Transverse colon (tissue), 4 donors: ENCODE measurements at regions of chr12 and their contacts with region 1.

Region 1: DNA sequence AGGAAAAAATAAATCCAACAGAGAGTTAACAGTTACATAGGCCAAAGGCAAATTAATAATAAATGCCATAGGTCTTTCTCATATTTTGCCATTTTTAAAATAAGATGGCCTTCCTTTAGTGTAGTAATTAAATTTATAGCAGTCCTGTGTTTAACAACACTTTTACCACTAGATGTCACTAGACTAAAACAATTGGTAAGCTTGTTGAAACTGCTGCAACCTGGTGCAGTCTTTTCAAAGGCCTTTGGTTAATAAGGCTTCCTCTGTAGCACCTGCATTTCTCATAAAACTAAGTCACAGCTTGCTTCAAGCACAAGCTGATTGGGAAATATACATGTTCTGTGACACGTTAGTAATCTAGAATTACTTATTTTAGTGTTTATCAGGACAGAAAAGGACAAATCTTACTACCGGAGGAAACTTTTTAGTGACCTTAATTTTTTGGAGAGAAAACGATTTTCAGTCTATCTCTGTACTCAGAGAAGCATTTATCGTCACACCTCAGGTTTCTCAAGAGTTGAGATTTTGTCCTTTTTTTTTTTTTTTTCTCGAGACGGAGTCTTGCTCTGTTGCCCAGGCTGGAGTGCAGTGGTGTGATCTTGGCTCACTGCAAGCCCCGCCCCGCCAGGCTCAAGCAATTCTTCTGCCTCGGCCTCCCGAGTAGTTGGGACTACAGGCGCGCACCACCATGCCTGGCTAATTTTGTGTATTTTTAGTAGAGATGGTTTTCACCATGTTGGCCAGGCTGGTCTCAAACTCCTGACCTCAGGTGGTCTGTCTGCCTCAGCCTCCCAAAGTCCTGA is 20.0 kb downstream of the BORCS5 start:
- DNase-seq: no peak
- H3K4me3 ChIP-seq: no peak overlapping the region
- H3K27ac ChIP-seq: peak overlapping the region in 1 of 4 donors; percentile 2
- H3K4me1 ChIP-seq: peaks cover 4 to 38% (median 11%) of the 10 kb centered on the region in 4 donors
- H3K27me3 ChIP-seq: no peaks in the 10 kb centered on the region
- CTCF ChIP-seq: peak; percentile 70 to 88 (median 74)
- EP300 ChIP-seq: no peak
- POLR2A ChIP-seq: no peak

Region 2: GRCh38 chr12:12229556-12230092 is 147.2 kb before region 1 on chr12:
- in situ Hi-C with region 1: no loop called
- intact Hi-C with region 1: no loop called
- DNase-seq: no peak
- H3K4me3 ChIP-seq: no peak overlapping the region
- H3K27ac ChIP-seq: no peak overlapping the region
- H3K4me1 ChIP-seq: peaks cover 0 to 11% (median 5%) of the 10 kb centered on the region in 4 donors
- H3K27me3 ChIP-seq: no peaks in the 10 kb centered on the region
- CTCF ChIP-seq: no peak
- EP300 ChIP-seq: no peak
- POLR2A ChIP-seq: no peak

Region 3: DNA sequence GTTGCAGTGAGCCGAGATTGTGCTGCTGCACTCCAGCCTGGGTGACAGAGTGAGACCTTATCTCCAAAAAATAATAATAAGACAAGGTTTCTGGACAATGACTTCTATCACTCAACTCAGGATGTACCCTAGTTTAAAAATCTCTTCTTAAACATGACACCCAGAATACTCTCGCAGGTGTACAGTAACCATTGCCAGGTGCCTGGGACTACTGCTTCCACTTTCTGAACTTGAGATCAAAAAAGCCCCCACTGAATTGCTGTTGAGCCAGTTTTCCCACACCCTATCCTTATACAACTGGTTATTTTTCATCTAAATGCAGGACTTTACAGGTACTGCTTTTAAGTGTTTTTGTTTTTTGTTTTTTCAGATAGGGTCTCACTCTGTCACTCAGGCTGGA is 16.3 kb after region 1 on chr12:
- in situ Hi-C with region 1: no loop called
- intact Hi-C with region 1: loop called (anchors 1 kb)
- DNase-seq: no peak
- H3K4me3 ChIP-seq: no peak overlapping the region
- H3K27ac ChIP-seq: no peak overlapping the region
- H3K4me1 ChIP-seq: peaks cover 0 to 5% (median 0%) of the 10 kb centered on the region in 4 donors
- H3K27me3 ChIP-seq: no peaks in the 10 kb centered on the region
- CTCF ChIP-seq: no peak
- EP300 ChIP-seq: no peak
- POLR2A ChIP-seq: no peak

Region 4: GRCh38 chr12:12442548-12443071 is 65.8 kb after region 1 on chr12:
- in situ Hi-C with region 1: no loop called
- intact Hi-C with region 1: no loop called
- DNase-seq: no peak
- H3K4me3 ChIP-seq: no peak overlapping the region
- H3K27ac ChIP-seq: peak overlapping the region; percentile 43 to 66 (median 60)
- H3K4me1 ChIP-seq: peaks cover 0 to 52% (median 12%) of the 10 kb centered on the region in 4 donors
- H3K27me3 ChIP-seq: no peaks in the 10 kb centered on the region
- CTCF ChIP-seq: no peak
- EP300 ChIP-seq: no peak
- POLR2A ChIP-seq: no peak

Region 5: DNA sequence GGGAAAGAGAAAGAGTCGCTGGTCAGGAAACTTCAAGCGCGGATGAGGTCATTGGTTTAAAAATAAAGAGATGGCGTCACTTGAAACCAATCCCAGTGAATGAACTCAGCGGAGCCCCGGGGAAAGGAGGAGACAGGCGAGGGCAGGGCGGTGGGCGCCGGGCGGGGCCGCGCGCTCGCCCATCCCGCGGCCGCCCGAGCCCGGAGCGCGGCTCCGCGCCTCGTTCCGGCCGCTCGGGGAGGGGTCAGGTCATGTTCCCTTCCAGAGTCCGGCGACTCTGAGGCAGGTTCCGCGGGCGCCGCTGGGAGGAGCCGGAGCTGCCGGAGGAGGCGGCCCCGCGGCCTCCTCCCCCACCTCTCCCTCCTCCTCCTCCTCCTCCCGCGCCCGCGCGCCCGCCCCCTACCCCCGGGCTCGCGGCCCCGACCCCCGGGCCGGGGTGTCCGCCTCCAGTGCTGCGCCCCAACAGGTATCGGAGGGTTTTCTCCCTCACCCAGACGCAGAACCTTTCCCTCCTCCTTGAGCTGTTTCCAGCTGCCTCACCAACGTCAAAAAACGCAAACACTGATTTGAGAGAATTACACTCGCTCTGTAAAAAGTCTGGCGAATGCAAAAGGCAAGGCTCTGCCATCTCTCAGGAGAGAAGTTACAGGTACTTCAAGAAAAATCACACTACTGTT is 185.9 kb after region 1 on chr12 and contains the start of gene DUSP16:
- in situ Hi-C with region 1: loop called in 2 of 4 experiments (anchors 10 to 25 kb)
- intact Hi-C with region 1: loop called (anchors 5 kb)
- DNase-seq: peak; percentile 92
- H3K4me3 ChIP-seq: peak within 1 kb of the TSS; percentile 76 to 93 (median 88)
- H3K27ac ChIP-seq: peak within 1 kb of the TSS; percentile 99 to 100 (median 100)
- H3K4me1 ChIP-seq: peaks cover 0 to 45% (median 32%) of the 10 kb centered on the region in 4 donors
- H3K27me3 ChIP-seq: no peaks in the 10 kb centered on the region
- CTCF ChIP-seq: peak in 2 of 5 experiments; percentile 15 to 21
- EP300 ChIP-seq: no peak
- POLR2A ChIP-seq: peak; percentile 49
- total RNA-seq, gene DUSP16: 16.1 to 47.0 (median 40.0) TPM

Region 6: GRCh38 chr12:12704593-12705230 is 327.9 kb after region 1 on chr12:
- in situ Hi-C with region 1: loop called (anchors 10 to 25 kb)
- intact Hi-C with region 1: loop called (anchors 2 kb)
- DNase-seq: peak; percentile 60
- H3K4me3 ChIP-seq: no peak overlapping the region
- H3K27ac ChIP-seq: peak overlapping the region; percentile 53 to 72 (median 70)
- H3K4me1 ChIP-seq: peaks cover 2 to 20% (median 6%) of the 10 kb centered on the region in 4 donors
- H3K27me3 ChIP-seq: no peaks in the 10 kb centered on the region
- CTCF ChIP-seq: peak; percentile 76 to 95 (median 80)
- EP300 ChIP-seq: no peak
- POLR2A ChIP-seq: no peak

Region 7: GRCh38 chr12:12724661-12725545 is 348.1 kb after region 1 on chr12:
- in situ Hi-C with region 1: loop called in 1 of 4 experiments (anchors 25 kb)
- intact Hi-C with region 1: no loop called
- DNase-seq: peak; percentile 95
- H3K4me3 ChIP-seq: peak overlapping the region; percentile 57 to 99 (median 83)
- H3K27ac ChIP-seq: peak overlapping the region; percentile 99 to 100 (median 100)
- H3K4me1 ChIP-seq: peaks cover 4 to 45% (median 35%) of the 10 kb centered on the region in 4 donors
- H3K27me3 ChIP-seq: no peaks in the 10 kb centered on the region
- CTCF ChIP-seq: peak in 2 of 5 experiments; percentile 14 to 18
- EP300 ChIP-seq: peak; percentile 8
- POLR2A ChIP-seq: peak; percentile 85